Panc1 (cell line): ENCODE measurements at regions of chr2 and their contacts with region 1.

Region 1: GRCh38 chr2:47539228-47539627 is 136.3 kb downstream of the MSH2 start:
- DNase-seq: no peak
- ATAC-seq: no peak
- H3K4me3 ChIP-seq: no peak overlapping the region
- H3K27ac ChIP-seq: no peak overlapping the region
- H3K4me1 ChIP-seq: no peaks in the 10 kb centered on the region
- H3K27me3 ChIP-seq: no peaks in the 10 kb centered on the region
- CTCF ChIP-seq: no peak

Region 2: GRCh38 chr2:47386551-47386950 is 152.7 kb before region 1 on chr2:
- CTCF ChIA-PET with region 1: no interaction called
- POLR2A ChIA-PET with region 1: no interaction called
- in situ Hi-C with region 1: no loop called
- intact Hi-C with region 1: no loop called
- DNase-seq: no peak
- ATAC-seq: no peak
- H3K4me3 ChIP-seq: no peak overlapping the region
- H3K27ac ChIP-seq: no peak overlapping the region
- H3K4me1 ChIP-seq: no peaks in the 10 kb centered on the region
- H3K27me3 ChIP-seq: no peaks in the 10 kb centered on the region
- CTCF ChIP-seq: no peak

Region 3: DNA sequence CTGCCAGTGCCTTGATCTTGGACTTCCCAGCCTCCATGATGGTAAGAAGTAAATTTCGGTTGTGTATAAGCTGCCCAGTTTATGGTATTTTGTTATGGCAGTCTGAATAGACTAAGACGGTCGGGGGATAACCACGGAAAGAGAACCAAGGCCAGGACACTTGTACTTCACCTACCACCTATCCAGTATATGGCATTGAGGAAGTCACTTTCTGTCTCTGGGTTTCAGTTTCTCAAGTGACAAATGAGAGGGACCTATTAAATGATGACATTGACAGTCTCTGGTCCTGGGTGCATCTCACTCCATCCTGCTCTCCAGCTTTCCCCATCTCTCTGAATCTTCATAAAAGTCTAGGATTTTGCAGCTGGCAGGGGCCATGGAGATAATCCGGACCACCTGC is 59.9 kb after region 1 on chr2:
- CTCF ChIA-PET with region 1: no interaction called
- POLR2A ChIA-PET with region 1: no interaction called
- in situ Hi-C with region 1: no loop called
- intact Hi-C with region 1: no loop called
- DNase-seq: no peak
- ATAC-seq: no peak
- H3K4me3 ChIP-seq: no peak overlapping the region
- H3K27ac ChIP-seq: no peak overlapping the region
- H3K4me1 ChIP-seq: no peaks in the 10 kb centered on the region
- H3K27me3 ChIP-seq: peaks cover 13% of the 10 kb centered on the region
- CTCF ChIP-seq: no peak

Region 4: GRCh38 chr2:47868611-47869352 is 329.6 kb after region 1 on chr2:
- CTCF ChIA-PET with region 1: interaction called, 14 read pairs
- POLR2A ChIA-PET with region 1: no interaction called
- in situ Hi-C with region 1: no loop called
- intact Hi-C with region 1: no loop called
- DNase-seq: no peak
- ATAC-seq: no peak
- H3K4me3 ChIP-seq: no peak overlapping the region
- H3K27ac ChIP-seq: no peak overlapping the region
- H3K4me1 ChIP-seq: peaks cover 16% of the 10 kb centered on the region; the same call in 1 of the 2 replicates
- H3K27me3 ChIP-seq: no peaks in the 10 kb centered on the region
- CTCF ChIP-seq: no peak